ENCODE measurements at regions of chr20 and their contacts with region 1.

Region 1: DNA sequence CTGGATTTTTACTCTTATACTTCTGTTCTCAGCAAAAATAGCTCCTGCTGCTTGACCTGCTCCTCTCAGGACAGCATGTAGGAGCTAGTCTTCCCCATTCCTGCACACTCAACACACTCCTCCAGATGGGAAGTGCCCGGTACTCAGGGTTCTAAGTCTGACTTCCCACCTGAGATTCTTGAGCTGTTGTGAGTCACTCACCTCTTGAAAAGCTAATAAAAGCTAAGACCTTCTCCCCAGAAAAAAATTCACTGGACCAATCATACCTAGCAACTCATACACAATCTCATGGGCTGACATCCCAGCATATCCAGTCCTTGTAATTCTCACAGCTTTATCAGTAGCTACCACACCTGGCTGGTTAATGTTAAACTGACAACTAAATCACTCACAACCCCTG is 53.5 kb downstream of the TRPC4AP start:
- DNase-seq: peak in 1 of 4 experiments; percentile 16
- ATAC-seq: peak; percentile 42
- H3K4me3 ChIP-seq: no peak overlapping the region
- H3K27ac ChIP-seq: no peak overlapping the region
- H3K4me1 ChIP-seq: no peaks in the 10 kb centered on the region
- H3K27me3 ChIP-seq: no peaks in the 10 kb centered on the region
- CTCF ChIP-seq: no peak
- EP300 ChIP-seq: no peak
- POLR2A ChIP-seq: no peak
- RAD21 ChIP-seq: no peak

Region 2: DNA sequence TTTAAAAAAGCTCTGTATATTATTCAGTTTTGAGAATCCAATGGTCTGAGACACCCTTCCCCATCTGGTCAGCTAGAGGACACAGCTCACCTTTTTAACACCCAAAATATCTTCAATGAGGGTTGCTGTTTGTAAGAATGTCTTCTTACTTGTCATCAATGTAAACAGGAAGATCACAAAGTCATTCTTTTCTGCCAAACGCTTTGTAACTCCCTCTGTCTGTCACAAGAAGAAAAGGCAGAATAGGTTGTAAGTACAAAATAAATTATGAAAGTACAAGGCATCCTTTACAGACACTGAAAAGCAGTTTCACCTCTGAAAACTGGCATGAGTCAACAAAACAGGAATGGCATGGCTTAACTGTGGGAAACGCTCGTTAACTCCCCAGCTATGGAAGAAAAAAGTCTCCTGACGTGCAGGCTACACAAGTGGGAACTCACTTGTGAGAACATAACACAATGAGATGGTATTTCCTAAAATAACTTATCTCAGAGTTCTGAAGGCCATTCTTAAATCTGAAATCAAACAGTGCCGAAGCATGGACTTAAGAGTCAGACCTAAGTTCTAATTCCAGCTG is 10.7 kb after region 1 on chr20:
- CTCF ChIA-PET with region 1: no interaction called
- POLR2A ChIA-PET with region 1: interaction called, 14 read pairs
- in situ Hi-C with region 1: no loop called
- intact Hi-C with region 1: no loop called
- DNase-seq: no peak
- ATAC-seq: no peak
- H3K4me3 ChIP-seq: no peak overlapping the region
- H3K27ac ChIP-seq: no peak overlapping the region
- H3K4me1 ChIP-seq: no peaks in the 10 kb centered on the region
- H3K27me3 ChIP-seq: no peaks in the 10 kb centered on the region
- CTCF ChIP-seq: no peak
- EP300 ChIP-seq: no peak
- POLR2A ChIP-seq: no peak
- RAD21 ChIP-seq: no peak